ENCODE measurements at regions of chr20 and their contacts with region 1.

Region 1: DNA sequence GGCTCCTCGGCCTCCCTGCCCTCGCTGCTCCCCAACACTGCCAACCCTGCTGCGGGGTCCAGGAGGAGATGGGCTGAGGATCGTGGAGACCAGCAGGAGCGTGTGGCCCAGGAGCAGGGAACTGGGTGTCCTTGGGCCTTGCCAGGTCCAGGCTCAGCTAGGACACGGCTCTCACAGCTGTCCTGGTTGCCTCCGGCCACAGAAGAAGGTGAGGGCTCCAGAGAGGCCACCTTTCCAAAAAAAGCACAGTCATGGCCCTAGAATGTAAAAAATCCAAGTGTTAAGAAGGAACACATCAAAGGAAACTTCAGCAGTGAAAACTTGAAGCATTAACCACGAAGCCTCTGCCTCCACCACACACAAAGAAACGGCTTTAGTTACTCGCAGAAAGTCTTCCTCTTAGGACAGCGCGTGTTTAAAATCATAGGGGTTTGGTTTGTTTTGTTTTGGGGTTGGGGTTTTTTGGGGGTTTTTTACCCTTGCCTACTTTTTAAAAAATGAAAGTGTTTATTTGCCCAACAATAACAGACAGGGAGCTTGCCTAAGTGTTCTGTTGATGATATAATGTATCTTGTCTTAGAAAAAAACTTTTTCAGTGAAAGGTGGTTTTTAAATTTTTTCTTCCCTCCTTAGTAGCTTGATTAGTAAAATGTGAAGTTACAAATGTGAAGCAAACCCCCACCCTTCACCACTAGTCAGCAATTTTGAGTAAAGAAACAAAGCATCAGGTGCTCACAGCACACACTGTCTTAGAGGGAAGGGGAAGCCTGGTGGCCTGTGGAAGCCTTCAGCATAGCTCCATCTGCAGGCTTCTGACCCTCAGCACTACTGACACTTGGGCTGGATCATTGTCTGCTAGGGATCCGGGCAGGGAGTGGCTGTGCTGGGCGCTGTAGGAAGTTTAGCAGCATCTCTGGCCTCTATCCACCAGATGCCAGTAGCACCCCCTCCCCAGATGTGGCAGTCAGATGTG is 60.0 kb downstream of the PTPN1 start:
- DNase-seq: no peak
- ATAC-seq: peak; percentile 21 to 51 (median 32)
- H3K4me3 ChIP-seq: no peak overlapping the region
- H3K27ac ChIP-seq: peak overlapping the region in 4 of 12 donors; percentile 8 to 64 (median 30)
- H3K4me1 ChIP-seq: peaks cover 0 to 62% (median 44%) of the 10 kb centered on the region in 12 donors
- H3K27me3 ChIP-seq: no peaks in the 10 kb centered on the region
- CTCF ChIP-seq: peak in 8 of 12 donors; percentile 11 to 31 (median 20)
- POLR2A ChIP-seq: no peak

Region 2: GRCh38 chr20:50409495-50409894 is 160.7 kb before region 1 on chr20:
- intact Hi-C with region 1: no loop called
- DNase-seq: no peak
- ATAC-seq: peak; percentile 26 to 69 (median 60)
- H3K4me3 ChIP-seq: no peak overlapping the region
- H3K27ac ChIP-seq: peak overlapping the region in 11 of 12 donors; percentile 40 to 80 (median 49)
- H3K4me1 ChIP-seq: peaks cover 0 to 36% (median 17%) of the 10 kb centered on the region in 12 donors
- H3K27me3 ChIP-seq: no peaks in the 10 kb centered on the region
- CTCF ChIP-seq: no peak
- POLR2A ChIP-seq: no peak

Region 3: GRCh38 chr20:50484276-50484976 is 85.7 kb before region 1 on chr20:
- intact Hi-C with region 1: loop called in 7 of 10 experiments (anchors 5 to 10 kb)
- DNase-seq: no peak
- ATAC-seq: no peak
- H3K4me3 ChIP-seq: peak overlapping the region in 10 of 12 donors; percentile 31 to 63 (median 53)
- H3K27ac ChIP-seq: peak overlapping the region in 11 of 12 donors; percentile 55 to 94 (median 78)
- H3K4me1 ChIP-seq: peaks cover 0 to 24% (median 8%) of the 10 kb centered on the region in 12 donors
- H3K27me3 ChIP-seq: no peaks in the 10 kb centered on the region
- CTCF ChIP-seq: no peak
- POLR2A ChIP-seq: no peak

Region 4: DNA sequence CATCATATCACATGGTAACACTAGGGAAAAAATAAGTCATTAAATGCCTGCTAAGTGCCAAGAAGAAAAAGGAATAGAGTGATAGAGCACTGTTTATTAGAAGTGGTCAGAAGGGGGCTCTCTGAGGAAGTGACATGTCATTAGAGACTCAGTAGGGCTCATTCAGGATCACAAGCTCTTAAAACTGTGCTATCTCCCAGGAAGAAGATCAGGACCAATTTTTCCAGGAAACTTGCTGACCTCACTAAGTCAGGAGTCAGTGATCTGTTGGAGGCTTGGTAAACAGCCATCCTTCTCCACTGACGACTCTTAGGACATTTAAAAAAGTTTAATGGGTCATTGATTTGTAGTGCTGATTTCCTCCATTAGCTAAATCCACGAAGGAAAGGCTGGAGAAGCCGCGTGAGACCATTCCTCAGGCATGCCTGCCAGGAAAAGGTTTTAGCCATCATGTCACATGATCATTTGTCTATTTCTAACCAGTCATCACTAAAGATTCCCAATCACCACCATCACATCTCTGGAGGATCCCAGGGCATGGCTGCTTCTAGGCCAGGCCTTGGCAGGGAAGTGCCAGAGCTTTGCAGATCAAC is 65.8 kb before region 1 on chr20:
- intact Hi-C with region 1: loop called in 2 of 10 experiments (anchors 5 kb)
- DNase-seq: no peak
- ATAC-seq: peak in 3 of 4 donors; percentile 43 to 67 (median 50)
- H3K4me3 ChIP-seq: no peak overlapping the region
- H3K27ac ChIP-seq: peak overlapping the region in 9 of 12 donors; percentile 14 to 91 (median 35)
- H3K4me1 ChIP-seq: peaks cover 0 to 57% (median 4%) of the 10 kb centered on the region in 12 donors
- H3K27me3 ChIP-seq: no peaks in the 10 kb centered on the region
- CTCF ChIP-seq: peak in 9 of 12 donors; percentile 10 to 51 (median 26)
- POLR2A ChIP-seq: no peak

Region 5: DNA sequence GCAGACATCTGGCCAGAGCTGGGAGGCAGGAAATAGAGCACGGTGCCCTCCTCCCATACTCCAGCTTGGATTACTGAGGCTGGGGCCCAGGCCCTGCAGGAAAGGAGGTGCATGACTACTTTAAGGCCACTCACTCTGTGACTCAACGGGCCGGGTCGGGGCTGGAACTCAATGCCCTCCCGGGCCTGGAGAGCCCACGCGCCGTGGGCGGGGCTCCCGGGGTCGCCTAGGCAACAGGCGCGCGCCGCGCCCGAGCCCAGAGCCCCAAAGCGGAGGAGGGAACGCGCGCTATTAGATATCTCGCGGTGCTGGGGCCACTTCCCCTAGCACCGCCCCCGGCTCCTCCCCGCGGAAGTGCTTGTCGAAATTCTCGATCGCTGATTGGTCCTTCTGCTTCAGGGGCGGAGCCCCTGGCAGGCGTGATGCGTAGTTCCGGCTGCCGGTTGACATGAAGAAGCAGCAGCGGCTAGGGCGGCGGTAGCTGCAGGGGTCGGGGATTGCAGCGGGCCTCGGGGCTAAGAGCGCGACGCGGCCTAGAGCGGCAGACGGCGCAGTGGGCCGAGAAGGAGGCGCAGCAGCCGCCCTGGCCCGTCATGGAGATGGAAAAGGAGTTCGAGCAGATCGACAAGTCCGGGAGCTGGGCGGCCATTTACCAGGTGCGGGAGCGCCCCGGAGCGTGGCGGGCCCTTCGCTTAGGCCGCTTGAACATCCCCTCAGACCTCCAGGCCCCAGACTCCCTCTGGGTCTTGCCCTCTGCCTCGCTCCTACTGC is 60.0 kb before region 1 on chr20 and contains the start of gene PTPN1:
- intact Hi-C with region 1: loop called in 9 of 10 experiments (anchors 2 to 5 kb)
- DNase-seq: peak; percentile 99
- ATAC-seq: peak; percentile 96 to 98 (median 98)
- H3K4me3 ChIP-seq: peak within 1 kb of the TSS; percentile 71 to 100 (median 98)
- H3K27ac ChIP-seq: peak within 1 kb of the TSS; percentile 80 to 96 (median 92)
- H3K4me1 ChIP-seq: peaks cover 0 to 55% (median 41%) of the 10 kb centered on the region in 12 donors
- H3K27me3 ChIP-seq: no peaks in the 10 kb centered on the region
- CTCF ChIP-seq: peak in 2 of 12 donors; percentile 10 to 14
- POLR2A ChIP-seq: peak; percentile 97 to 99
- total RNA-seq, gene PTPN1: 24.2 to 63.3 (median 32.0) TPM

Region 6: DNA sequence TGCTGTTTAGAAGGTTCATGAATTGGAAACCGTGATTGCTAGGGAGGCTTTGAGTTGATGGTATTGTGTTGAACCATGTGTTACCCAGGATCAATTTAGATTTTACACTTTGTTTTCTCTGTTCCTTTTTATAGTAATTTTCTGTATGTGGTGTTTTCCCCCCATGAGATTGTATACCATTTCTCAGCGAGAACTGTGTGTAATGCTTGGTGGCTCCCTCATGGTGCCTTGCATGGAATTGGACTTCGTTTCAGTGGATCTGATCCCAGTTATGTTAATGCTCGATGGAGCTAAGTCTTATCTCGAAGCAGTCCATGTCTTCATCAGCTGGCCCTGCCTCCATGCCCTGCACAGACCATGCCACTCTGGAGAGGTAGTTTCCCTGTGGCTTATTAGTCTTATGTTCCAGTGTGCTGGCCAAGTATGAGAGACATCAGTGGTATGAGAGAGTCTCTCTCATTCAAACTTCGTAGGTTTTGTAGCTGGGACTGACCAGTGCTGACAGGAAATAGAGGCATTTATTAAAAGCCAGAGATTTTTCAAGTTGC is 41.3 kb before region 1 on chr20:
- intact Hi-C with region 1: loop called in 3 of 10 experiments (anchors 5 kb)
- DNase-seq: no peak
- ATAC-seq: peak; percentile 64 to 84 (median 76)
- H3K4me3 ChIP-seq: no peak overlapping the region
- H3K27ac ChIP-seq: peak overlapping the region in 4 of 12 donors; percentile 12 to 52 (median 23)
- H3K4me1 ChIP-seq: peaks cover 6 to 91% (median 46%) of the 10 kb centered on the region in 12 donors
- H3K27me3 ChIP-seq: no peaks in the 10 kb centered on the region
- CTCF ChIP-seq: no peak
- POLR2A ChIP-seq: no peak

Region 7: DNA sequence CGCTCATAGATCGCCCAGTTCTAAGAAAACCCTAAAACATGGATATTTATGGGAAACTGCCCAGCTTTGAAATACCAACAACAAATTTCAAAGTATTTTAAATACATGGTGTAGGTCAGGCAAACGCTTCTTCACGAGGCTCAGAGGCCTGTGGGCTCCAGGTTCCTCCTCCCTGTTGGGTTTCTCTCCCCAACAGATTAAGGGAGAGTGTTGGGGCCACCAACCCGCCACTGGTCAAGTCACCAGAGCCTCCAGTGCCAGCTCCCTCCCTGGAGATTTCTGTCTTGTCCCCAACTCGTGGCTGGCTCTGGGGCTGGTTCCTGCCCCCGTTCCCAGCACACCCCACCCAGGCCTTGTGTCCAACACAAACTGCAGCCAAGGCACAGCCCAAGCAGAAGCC is 27.9 kb after region 1 on chr20:
- intact Hi-C with region 1: loop called in 1 of 10 experiments (anchors 2 kb)
- DNase-seq: no peak
- ATAC-seq: no peak
- H3K4me3 ChIP-seq: no peak overlapping the region
- H3K27ac ChIP-seq: no peak overlapping the region
- H3K4me1 ChIP-seq: peaks cover 0 to 27% (median 4%) of the 10 kb centered on the region in 12 donors
- H3K27me3 ChIP-seq: peaks cover 0 to 17% (median 5%) of the 10 kb centered on the region in 9 donors
- CTCF ChIP-seq: no peak
- POLR2A ChIP-seq: no peak